ENCODE measurements at regions of chr5 and their contacts with region 1.

Region 1: GRCh38 chr5:32232441-32233219 is 58.5 kb upstream of the GOLPH3 start:
- DNase-seq: peak; percentile 94
- H3K4me3 ChIP-seq: no peak overlapping the region
- H3K27ac ChIP-seq: peak overlapping the region; percentile 60 to 75 (median 72)
- H3K4me1 ChIP-seq: peaks cover 27 to 40% (median 32%) of the 10 kb centered on the region in 4 donors
- H3K27me3 ChIP-seq: no peaks in the 10 kb centered on the region
- CTCF ChIP-seq: peak; percentile 79 to 87 (median 81)
- EP300 ChIP-seq: no peak
- POLR2A ChIP-seq: no peak

Region 2: GRCh38 chr5:32312647-32313523 is 80.3 kb after region 1 on chr5 and contains the start of gene MTMR12:
- intact Hi-C with region 1: loop called (anchors 5 kb)
- DNase-seq: peak; percentile 100
- H3K4me3 ChIP-seq: peak within 1 kb of the TSS; percentile 61 to 99 (median 96)
- H3K27ac ChIP-seq: peak within 1 kb of the TSS; percentile 94 to 100 (median 99)
- H3K4me1 ChIP-seq: peaks cover 41 to 50% (median 47%) of the 10 kb centered on the region in 4 donors
- H3K27me3 ChIP-seq: no peaks in the 10 kb centered on the region
- CTCF ChIP-seq: no peak
- EP300 ChIP-seq: no peak
- POLR2A ChIP-seq: peak; percentile 68
- total RNA-seq, gene MTMR12: 49.9 to 94.0 (median 63.8) TPM

Region 3: GRCh38 chr5:32329308-32329834 is 96.7 kb after region 1 on chr5:
- intact Hi-C with region 1: loop called (anchors 2 kb)
- DNase-seq: peak; percentile 92
- H3K4me3 ChIP-seq: no peak overlapping the region
- H3K27ac ChIP-seq: peak overlapping the region in 1 of 4 donors; percentile 5
- H3K4me1 ChIP-seq: peaks cover 0 to 34% (median 22%) of the 10 kb centered on the region in 4 donors
- H3K27me3 ChIP-seq: no peaks in the 10 kb centered on the region
- CTCF ChIP-seq: peak; percentile 55 to 79 (median 71)
- EP300 ChIP-seq: no peak
- POLR2A ChIP-seq: no peak

Region 4: GRCh38 chr5:32585446-32586275 is 353.0 kb after region 1 on chr5 and contains the start of gene SUB1:
- intact Hi-C with region 1: loop called (anchors 10 kb)
- DNase-seq: peak; percentile 97
- H3K4me3 ChIP-seq: peak within 1 kb of the TSS; percentile 88 to 99 (median 90)
- H3K27ac ChIP-seq: peak within 1 kb of the TSS; percentile 95 to 100 (median 98)
- H3K4me1 ChIP-seq: peaks cover 14 to 42% (median 30%) of the 10 kb centered on the region in 4 donors
- H3K27me3 ChIP-seq: no peaks in the 10 kb centered on the region
- CTCF ChIP-seq: no peak
- EP300 ChIP-seq: no peak
- POLR2A ChIP-seq: peak; percentile 67
- total RNA-seq, gene SUB1: 66.4 to 154 (median 90.1) TPM

Region 5: GRCh38 chr5:32613050-32613672 is 380.5 kb after region 1 on chr5:
- intact Hi-C with region 1: loop called (anchors 10 kb)
- DNase-seq: peak; percentile 97
- H3K4me3 ChIP-seq: no peak overlapping the region
- H3K27ac ChIP-seq: no peak overlapping the region
- H3K4me1 ChIP-seq: peaks cover 6 to 21% (median 13%) of the 10 kb centered on the region in 4 donors
- H3K27me3 ChIP-seq: no peaks in the 10 kb centered on the region
- CTCF ChIP-seq: peak; percentile 90 to 94 (median 93)
- EP300 ChIP-seq: no peak
- POLR2A ChIP-seq: no peak

Region 6: GRCh38 chr5:32724526-32724925 is 491.9 kb after region 1 on chr5:
- intact Hi-C with region 1: no loop called
- DNase-seq: no peak
- H3K4me3 ChIP-seq: no peak overlapping the region
- H3K27ac ChIP-seq: no peak overlapping the region
- H3K4me1 ChIP-seq: no peaks in the 10 kb centered on the region
- H3K27me3 ChIP-seq: no peaks in the 10 kb centered on the region
- CTCF ChIP-seq: no peak
- EP300 ChIP-seq: no peak
- POLR2A ChIP-seq: no peak

Measured in esophagus muscularis mucosa (tissue), 4 donors.